Naive thymus-derived CD4-positive, alpha-beta T cell (primary cell): ENCODE measurements at regions of chr4 and their contacts with region 1.

Region 1: DNA sequence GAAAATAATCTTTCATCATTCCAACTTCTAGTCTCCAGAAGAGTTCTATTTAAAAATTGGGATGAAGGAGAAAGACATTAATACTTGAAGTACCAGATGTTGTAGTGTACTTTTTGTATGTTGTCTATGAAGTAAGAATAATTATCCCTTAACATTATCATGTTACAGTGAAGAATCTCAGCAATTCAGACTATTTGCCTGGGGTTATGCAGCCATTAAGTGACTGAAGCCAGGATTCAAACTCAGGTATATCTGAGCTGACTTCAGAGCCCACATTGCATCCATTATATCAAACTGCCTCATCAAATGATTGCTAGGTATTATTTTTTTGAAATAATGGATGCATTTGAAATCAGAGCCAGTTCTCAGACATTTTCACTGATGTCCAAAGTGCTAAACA is 76.1 kb upstream of the FHDC1 start:
- DNase-seq: no peak
- ATAC-seq: no peak
- H3K4me3 ChIP-seq: no peak overlapping the region
- H3K4me3 Mint-ChIP-seq: no peak overlapping the region
- H3K27ac ChIP-seq: no peak overlapping the region
- H3K27ac Mint-ChIP-seq: no peak overlapping the region
- H3K4me1 ChIP-seq: no peaks in the 10 kb centered on the region
- H3K4me1 Mint-ChIP-seq: no peaks in the 10 kb centered on the region
- H3K27me3 ChIP-seq: no peaks in the 10 kb centered on the region
- H3K27me3 Mint-ChIP-seq: no peaks in the 10 kb centered on the region

Region 2: DNA sequence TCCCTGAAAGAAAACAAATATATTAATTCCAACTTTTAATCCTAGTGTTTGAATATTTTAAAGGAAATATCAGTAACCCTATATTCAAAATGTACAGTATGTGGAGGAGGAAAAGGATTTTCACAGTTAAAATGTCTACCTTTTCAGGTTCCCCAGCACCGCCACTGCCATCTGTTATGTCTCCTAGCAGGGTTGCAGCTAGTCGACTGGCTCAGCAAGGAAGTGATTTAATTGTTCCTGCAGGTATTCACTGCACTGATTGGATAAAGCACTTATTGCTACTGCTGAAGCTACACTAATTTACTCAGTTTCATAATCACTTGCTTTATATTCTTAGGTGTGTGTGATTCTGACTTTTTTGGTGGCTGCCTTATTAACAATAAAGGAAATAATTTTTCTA is 10.6 kb after region 1 on chr4:
- CTCF ChIA-PET with region 1: no interaction called
- POLR2A ChIA-PET with region 1: no interaction called
- intact Hi-C with region 1: loop called in 1 of 2 experiments (anchors 1 kb)
- DNase-seq: no peak
- ATAC-seq: no peak
- H3K4me3 ChIP-seq: no peak overlapping the region
- H3K4me3 Mint-ChIP-seq: no peak overlapping the region
- H3K27ac ChIP-seq: no peak overlapping the region
- H3K27ac Mint-ChIP-seq: no peak overlapping the region
- H3K4me1 ChIP-seq: no peaks in the 10 kb centered on the region
- H3K4me1 Mint-ChIP-seq: no peaks in the 10 kb centered on the region
- H3K27me3 ChIP-seq: no peaks in the 10 kb centered on the region
- H3K27me3 Mint-ChIP-seq: no peaks in the 10 kb centered on the region